Sigmoid colon (tissue), 7 donors: ENCODE measurements at regions of chr5 and their contacts with region 1.

Region 1: GRCh38 chr5:177351385-177352329 is at the start of gene LMAN2:
- DNase-seq: peak; percentile 96
- H3K4me3 ChIP-seq: peak within 1 kb of the TSS; percentile 59 to 93 (median 83)
- H3K27ac ChIP-seq: peak within 1 kb of the TSS; percentile 89 to 96 (median 92)
- H3K4me1 ChIP-seq: peaks cover 0 to 51% (median 34%) of the 10 kb centered on the region in 4 donors
- H3K27me3 ChIP-seq: no peaks in the 10 kb centered on the region
- CTCF ChIP-seq: no peak
- EP300 ChIP-seq: no peak
- POLR2A ChIP-seq: peak; percentile 46 to 70
- total RNA-seq, gene LMAN2: 87.5 to 169 (median 98.2) TPM

Region 2: GRCh38 chr5:176901260-176902101 is 450.2 kb before region 1 on chr5:
- intact Hi-C with region 1: no loop called
- DNase-seq: peak; percentile 43
- H3K4me3 ChIP-seq: no peak overlapping the region
- H3K27ac ChIP-seq: no peak overlapping the region
- H3K4me1 ChIP-seq: no peaks in the 10 kb centered on the region
- H3K27me3 ChIP-seq: no peaks in the 10 kb centered on the region
- CTCF ChIP-seq: no peak
- EP300 ChIP-seq: no peak
- POLR2A ChIP-seq: no peak

Region 3: GRCh38 chr5:177368869-177369644 is 17.4 kb after region 1 on chr5:
- intact Hi-C with region 1: loop called (anchors 2 kb)
- DNase-seq: no peak
- H3K4me3 ChIP-seq: no peak overlapping the region
- H3K27ac ChIP-seq: no peak overlapping the region
- H3K4me1 ChIP-seq: peaks cover 0 to 46% (median 32%) of the 10 kb centered on the region in 4 donors
- H3K27me3 ChIP-seq: no peaks in the 10 kb centered on the region
- CTCF ChIP-seq: peak in 3 of 4 experiments; percentile 21 to 52 (median 46)
- EP300 ChIP-seq: no peak
- POLR2A ChIP-seq: no peak